ENCODE measurements at regions of chr19 and their contacts with region 1.

Region 1: GRCh38 chr19:3670796-3671679 is 29.2 kb downstream of the PIP5K1C start:
- DNase-seq: peak in 1 of 6 donors; percentile 74
- ATAC-seq: peak in 3 of 4 donors; percentile 31 to 38 (median 32)
- H3K4me3 ChIP-seq: no peak overlapping the region
- H3K27ac ChIP-seq: peak overlapping the region in 3 of 4 donors; percentile 45 to 48 (median 46)
- H3K4me1 ChIP-seq: no peaks in the 10 kb centered on the region
- H3K27me3 ChIP-seq: no peaks in the 10 kb centered on the region
- CTCF ChIP-seq: no peak

Region 2: GRCh38 chr19:3821857-3822364 is 150.9 kb after region 1 on chr19:
- intact Hi-C with region 1: loop called in 2 of 3 experiments (anchors 5 to 10 kb)
- DNase-seq: peak in 5 of 6 donors; percentile 34 to 92 (median 65)
- ATAC-seq: peak; percentile 69 to 93 (median 85)
- H3K4me3 ChIP-seq: no peak overlapping the region
- H3K27ac ChIP-seq: no peak overlapping the region
- H3K4me1 ChIP-seq: no peaks in the 10 kb centered on the region
- H3K27me3 ChIP-seq: no peaks in the 10 kb centered on the region
- CTCF ChIP-seq: peak; percentile 96 to 99 (median 98)

Region 3: GRCh38 chr19:3984908-3985642 is 314.0 kb after region 1 on chr19 and contains the start of gene EEF2:
- intact Hi-C with region 1: no loop called
- DNase-seq: peak; percentile 82 to 97 (median 94)
- ATAC-seq: peak; percentile 68 to 78 (median 76)
- H3K4me3 ChIP-seq: peak within 1 kb of the TSS; percentile 63 to 99 (median 88)
- H3K27ac ChIP-seq: peak within 1 kb of the TSS; percentile 73 to 92 (median 88)
- H3K4me1 ChIP-seq: peaks cover 16 to 39% (median 27%) of the 10 kb centered on the region in 3 donors
- H3K27me3 ChIP-seq: no peaks in the 10 kb centered on the region
- CTCF ChIP-seq: no peak
- total RNA-seq, gene EEF2: 2,199 to 4,238 (median 2,879) TPM

Measured in pancreas (tissue), 10 donors.